GM10248 (cell line): ENCODE measurements at regions of chr20 and their contacts with region 1.

Region 1: GRCh38 chr20:62791301-62792181 is 4.7 kb upstream of the MRGBP start:
- DNase-seq: peak; percentile 81
- CTCF ChIP-seq: peak; percentile 94

Region 2: GRCh38 chr20:62500237-62500864 is 291.2 kb before region 1 on chr20:
- CTCF ChIA-PET with region 1: interaction called, 36 read pairs
- POLR2A ChIA-PET with region 1: no interaction called
- DNase-seq: peak; percentile 85
- CTCF ChIP-seq: peak; percentile 88

Region 3: DNA sequence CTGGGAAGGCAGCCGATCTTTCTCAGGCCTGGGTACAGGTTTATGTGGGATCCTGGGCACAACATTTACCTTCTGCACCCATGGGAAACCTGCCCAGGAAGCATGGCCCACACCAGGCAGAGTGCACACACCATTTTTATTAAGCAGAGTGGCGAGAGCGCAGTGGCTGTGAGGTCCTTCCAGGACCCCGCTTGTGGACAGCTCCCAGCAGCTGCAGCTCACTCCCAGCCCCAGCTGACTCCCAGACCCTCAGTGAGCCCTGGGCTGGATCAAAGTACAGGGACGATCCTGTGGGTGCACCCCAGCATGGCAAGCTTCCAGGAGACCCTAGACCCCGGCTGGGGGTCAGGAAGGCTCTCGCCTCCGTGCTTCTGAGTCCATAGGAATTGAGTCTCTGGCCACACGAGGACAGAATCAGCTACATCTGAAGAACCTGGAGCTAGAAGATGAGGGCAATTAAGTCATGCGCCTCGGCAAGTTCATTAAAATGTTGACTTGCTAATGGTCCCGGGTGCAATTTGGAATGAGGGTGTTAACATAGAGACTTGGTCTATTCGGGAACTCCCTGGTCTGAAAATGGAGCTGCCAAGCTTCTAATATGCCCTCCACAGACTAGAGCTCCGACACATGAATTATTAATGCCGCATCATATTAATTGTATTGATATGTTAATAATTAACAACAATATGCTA is 214.6 kb before region 1 on chr20:
- CTCF ChIA-PET with region 1: interaction called, 11 read pairs
- POLR2A ChIA-PET with region 1: no interaction called
- DNase-seq: no peak
- CTCF ChIP-seq: no peak

Region 4: GRCh38 chr20:62663129-62664018 is 128.2 kb before region 1 on chr20:
- CTCF ChIA-PET with region 1: interaction called, 10 read pairs
- POLR2A ChIA-PET with region 1: no interaction called
- DNase-seq: no peak
- CTCF ChIP-seq: no peak

Region 5: DNA sequence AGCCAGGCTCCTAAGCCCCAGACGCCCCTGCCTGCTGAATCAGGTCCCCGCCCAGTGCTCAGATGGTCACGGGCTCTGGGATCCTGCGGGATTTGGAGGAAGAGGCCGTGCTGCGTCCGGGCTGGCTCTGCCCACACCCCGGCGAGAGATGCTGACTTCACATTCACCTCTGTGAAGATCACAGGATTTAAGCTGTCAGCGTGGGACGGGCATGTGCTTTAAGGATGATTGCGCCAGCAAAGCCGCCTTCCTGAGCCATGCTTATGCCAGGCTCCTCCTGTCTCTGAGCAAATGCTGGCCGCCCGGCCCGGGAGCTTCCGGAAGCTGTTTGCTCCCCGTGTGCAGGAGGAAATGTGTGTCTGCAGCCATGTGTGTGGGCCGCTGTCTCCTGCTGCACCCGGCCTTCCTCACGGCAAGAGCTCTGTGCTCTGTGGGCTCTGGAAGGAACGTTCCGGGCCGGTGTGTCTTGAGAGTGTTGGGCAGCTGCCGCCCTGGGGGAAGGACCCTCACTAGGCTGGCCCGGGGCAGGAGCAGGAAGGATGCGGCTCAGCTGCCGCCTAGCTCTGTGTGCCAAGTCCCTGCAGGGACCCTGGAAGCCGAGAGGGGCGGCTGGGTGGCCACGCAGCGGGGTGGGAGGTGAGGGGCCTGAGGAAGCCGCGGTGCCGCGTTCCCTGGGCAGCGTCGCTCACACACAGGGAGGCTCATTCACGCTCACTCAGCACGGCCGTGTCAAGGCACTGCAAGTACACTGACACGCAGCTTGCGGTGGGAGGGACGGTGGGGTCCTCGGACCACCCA is 234.2 kb after region 1 on chr20:
- CTCF ChIA-PET with region 1: no interaction called
- POLR2A ChIA-PET with region 1: no interaction called
- DNase-seq: no peak
- CTCF ChIP-seq: no peak